ENCODE measurements at regions of chr10 and their contacts with region 1.

Region 1: GRCh38 chr10:110993024-110993693 is 73.8 kb downstream of the SHOC2 start:
- DNase-seq: no peak
- ATAC-seq: no peak
- H3K4me3 Mint-ChIP-seq: no peak overlapping the region
- H3K27ac Mint-ChIP-seq: no peak overlapping the region
- H3K4me1 Mint-ChIP-seq: peaks cover 32% of the 10 kb centered on the region
- H3K27me3 Mint-ChIP-seq: no peaks in the 10 kb centered on the region
- CTCF ChIP-seq: no peak

Region 2: GRCh38 chr10:111004016-111004415 is 10.9 kb after region 1 on chr10:
- CTCF ChIA-PET with region 1: no interaction called
- POLR2A ChIA-PET with region 1: no interaction called
- intact Hi-C with region 1: loop called (anchors 2 kb)
- DNase-seq: no peak
- ATAC-seq: no peak
- H3K4me3 Mint-ChIP-seq: no peak overlapping the region
- H3K27ac Mint-ChIP-seq: no peak overlapping the region
- H3K4me1 Mint-ChIP-seq: peaks cover 2% of the 10 kb centered on the region
- H3K27me3 Mint-ChIP-seq: no peaks in the 10 kb centered on the region
- CTCF ChIP-seq: no peak